GM13977 (cell line): ENCODE measurements at regions of chr3 and their contacts with region 1.

Region 1: DNA sequence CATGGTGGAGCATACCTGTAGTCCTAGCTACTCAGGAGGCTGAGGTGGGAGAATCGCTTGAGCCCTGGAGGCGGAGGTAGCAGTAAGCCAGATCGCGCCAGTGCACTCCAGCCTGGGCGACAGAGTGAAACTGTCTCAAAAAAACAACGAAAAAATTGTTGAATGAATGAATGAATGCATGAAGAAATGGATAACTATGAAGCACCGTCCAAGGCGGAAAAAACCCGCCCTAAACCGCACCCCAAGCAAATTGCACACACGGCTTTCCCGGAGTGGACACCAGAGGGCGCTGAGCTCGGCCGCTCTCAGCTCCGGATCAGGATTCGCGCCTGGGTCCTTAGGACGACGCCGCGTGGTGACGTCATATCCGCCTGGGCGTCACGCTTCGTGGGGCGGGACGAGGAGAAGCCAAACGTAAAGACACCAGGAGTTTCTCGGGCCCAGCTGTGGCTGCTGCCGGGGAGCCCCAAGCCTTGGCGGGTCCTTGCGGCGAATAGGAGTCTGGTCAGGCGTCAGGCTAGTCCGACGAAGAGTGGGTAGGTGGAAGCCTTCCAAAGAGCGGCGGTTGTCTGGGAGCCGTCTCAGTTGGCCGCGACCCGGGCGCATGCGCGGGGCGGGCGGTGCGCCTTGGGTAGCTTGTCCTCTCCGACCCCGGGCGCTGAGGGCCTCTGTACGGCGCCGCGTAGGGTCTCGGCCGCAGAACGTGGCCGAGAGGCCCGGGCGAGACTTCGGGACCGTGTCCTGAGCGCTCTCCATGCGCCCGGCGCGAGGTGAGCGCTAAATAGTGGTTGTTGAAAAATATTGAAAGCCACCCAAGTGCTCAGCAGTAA is at the starts of genes HTD2 and RPP14:
- DNase-seq: peak; percentile 94
- CTCF ChIP-seq: peak; percentile 95

Region 2: GRCh38 chr3:58008140-58009025 is 297.7 kb before region 1 on chr3 and contains the start of gene FLNB:
- in situ Hi-C with region 1: loop called (anchors 25 kb)
- DNase-seq: peak; percentile 97
- CTCF ChIP-seq: peak; percentile 96

Region 3: GRCh38 chr3:58129041-58129770 is 176.9 kb before region 1 on chr3:
- in situ Hi-C with region 1: no loop called
- DNase-seq: no peak
- CTCF ChIP-seq: no peak

Region 4: DNA sequence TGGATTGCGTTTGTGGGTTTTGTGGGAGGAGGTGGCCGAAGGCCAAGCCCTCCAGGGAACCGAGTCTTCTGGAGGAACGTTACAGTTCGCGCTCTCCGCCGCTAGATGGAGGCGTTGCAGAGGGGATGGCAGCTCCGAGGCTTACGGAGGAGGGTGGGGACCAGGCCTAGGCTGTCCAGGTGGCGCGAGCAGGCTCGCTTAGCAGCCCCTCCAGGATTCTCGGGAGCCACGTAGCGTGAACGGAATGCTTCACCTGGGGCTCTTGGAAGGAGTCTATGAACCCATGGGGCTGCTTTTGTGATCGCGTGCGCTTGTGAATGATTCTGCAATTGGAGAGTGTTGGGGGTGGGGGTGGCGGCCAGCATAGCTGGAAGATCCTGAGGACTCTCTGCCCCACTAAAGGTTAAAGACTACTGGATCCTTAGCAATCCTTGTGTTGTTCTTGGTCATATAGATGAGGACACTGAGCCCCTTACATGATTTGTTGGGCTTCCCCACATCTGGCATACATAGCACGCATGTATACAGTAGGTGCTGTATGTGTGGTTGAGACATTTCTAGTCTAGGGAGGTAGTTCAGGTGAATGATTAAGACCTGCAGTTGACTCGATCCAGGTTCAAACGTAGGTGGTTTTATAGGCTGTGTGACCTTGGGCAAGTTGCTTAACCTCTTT is 334.7 kb after region 1 on chr3:
- in situ Hi-C with region 1: loop called (anchors 25 kb)
- DNase-seq: peak; percentile 82
- CTCF ChIP-seq: peak; percentile 93